ENCODE measurements at regions of chr1 and their contacts with region 1.

Region 1: DNA sequence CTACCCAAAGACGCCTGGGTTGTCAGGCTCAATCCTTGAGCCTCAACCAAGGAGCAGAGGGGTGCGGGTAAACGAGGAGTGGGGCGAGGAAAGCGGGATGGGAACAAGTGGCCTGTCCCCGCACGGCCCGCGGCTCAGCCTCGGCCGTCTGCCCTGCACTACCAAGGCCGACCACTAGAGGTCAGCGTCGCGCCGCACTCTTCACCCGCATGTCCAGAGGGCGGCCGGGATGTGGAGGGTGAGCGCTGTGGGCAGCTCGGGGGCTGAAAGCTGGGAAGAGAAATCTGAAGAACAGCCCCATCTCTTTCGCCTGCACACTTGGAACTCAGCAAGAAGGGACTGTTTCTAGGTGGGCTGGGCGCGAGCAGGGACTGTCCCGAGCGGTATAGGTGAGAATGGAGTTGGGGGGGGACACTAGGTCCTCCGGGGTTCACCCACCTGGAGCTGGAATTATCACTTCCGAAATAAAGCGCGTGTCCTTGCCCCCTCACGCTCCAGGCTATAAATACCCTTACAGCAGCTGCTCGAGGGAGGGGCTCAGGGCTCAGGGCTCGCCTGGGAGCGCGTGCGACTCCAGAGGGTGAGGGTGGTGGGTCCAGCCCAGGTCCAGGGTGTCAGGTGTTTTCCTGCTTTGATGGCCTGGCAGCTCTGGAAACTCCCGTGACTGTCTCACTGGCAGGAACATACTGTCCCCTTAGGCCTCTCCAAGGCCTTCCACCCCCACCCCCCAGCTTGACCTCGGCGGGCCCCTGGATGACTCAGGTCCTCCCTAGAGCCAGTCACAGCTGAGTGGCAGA is 9.8 kb downstream of the SLC30A2 start:
- DNase-seq: peak; percentile 78
- H3K4me3 Mint-ChIP-seq: peak overlapping the region; percentile 88
- H3K27ac Mint-ChIP-seq: no peak overlapping the region
- H3K4me1 Mint-ChIP-seq: peaks cover 13% of the 10 kb centered on the region
- H3K27me3 Mint-ChIP-seq: peaks cover 3% of the 10 kb centered on the region

Region 2: GRCh38 chr1:25239681-25240541 is 796.2 kb before region 1 on chr1:
- CTCF ChIA-PET with region 1: no interaction called
- intact Hi-C with region 1: no loop called
- DNase-seq: peak; percentile 96
- H3K4me3 Mint-ChIP-seq: peak overlapping the region; percentile 91
- H3K27ac Mint-ChIP-seq: peak overlapping the region; percentile 99
- H3K4me1 Mint-ChIP-seq: peaks cover 48% of the 10 kb centered on the region
- H3K27me3 Mint-ChIP-seq: no peaks in the 10 kb centered on the region

Region 3: GRCh38 chr1:26164036-26164860 is 128.1 kb after region 1 on chr1:
- CTCF ChIA-PET with region 1: interaction called, 3 read pairs
- intact Hi-C with region 1: loop called (anchors 1 kb)
- DNase-seq: peak; percentile 42
- H3K4me3 Mint-ChIP-seq: peak overlapping the region; percentile 50
- H3K27ac Mint-ChIP-seq: no peak overlapping the region
- H3K4me1 Mint-ChIP-seq: peaks cover 13% of the 10 kb centered on the region
- H3K27me3 Mint-ChIP-seq: peaks cover 25% of the 10 kb centered on the region